Calu3 (cell line): ENCODE measurements at regions of chrX and their contacts with region 1.

Region 1: GRCh38 chrX:74550295-74550802 is 64.1 kb downstream of the RLIM start:
- DNase-seq: peak; percentile 85
- H3K4me3 Mint-ChIP-seq: no peak overlapping the region
- H3K27ac Mint-ChIP-seq: no peak overlapping the region
- H3K4me1 Mint-ChIP-seq: no peaks in the 10 kb centered on the region
- H3K27me3 Mint-ChIP-seq: peaks cover 5% of the 10 kb centered on the region
- CTCF ChIP-seq: peak; percentile 99

Region 2: GRCh38 chrX:73987166-73987565 is 563.2 kb before region 1 on chrX:
- CTCF ChIA-PET with region 1: no interaction called
- intact Hi-C with region 1: no loop called
- DNase-seq: no peak
- H3K4me3 Mint-ChIP-seq: no peak overlapping the region
- H3K27ac Mint-ChIP-seq: no peak overlapping the region
- H3K4me1 Mint-ChIP-seq: no peaks in the 10 kb centered on the region
- H3K27me3 Mint-ChIP-seq: no peaks in the 10 kb centered on the region
- CTCF ChIP-seq: no peak

Region 3: DNA sequence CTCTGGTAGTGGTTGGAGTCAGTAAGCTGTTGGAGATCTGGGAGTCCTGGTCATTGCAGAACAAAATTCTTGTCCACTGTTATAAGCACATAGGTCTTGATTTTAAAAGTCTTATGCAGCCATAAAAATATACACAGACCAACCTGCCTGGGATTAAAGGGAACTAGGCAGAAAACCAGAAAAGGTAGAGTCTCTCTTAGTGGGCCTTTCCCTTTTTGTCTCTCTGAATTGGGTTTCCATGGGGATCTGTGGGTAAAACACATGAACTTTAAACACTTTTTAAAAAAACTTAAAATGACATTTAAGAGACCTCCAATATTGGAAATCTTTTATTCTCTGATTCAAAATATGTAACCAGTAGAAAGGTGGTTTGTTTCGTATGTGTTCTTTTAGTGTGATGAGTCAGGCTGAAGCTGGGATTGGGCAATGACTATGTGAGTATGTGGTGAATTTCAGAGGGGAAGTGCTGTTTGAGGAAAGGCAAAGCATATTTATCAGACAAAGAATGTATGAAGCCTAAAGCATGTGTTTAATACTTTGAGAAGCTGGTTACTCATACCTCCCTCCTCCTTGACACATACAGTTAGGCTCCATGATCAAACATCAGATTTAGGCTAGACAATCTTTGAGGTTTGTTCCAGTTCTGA is 99.4 kb before region 1 on chrX:
- CTCF ChIA-PET with region 1: no interaction called
- intact Hi-C with region 1: loop called (anchors 10 kb)
- DNase-seq: no peak
- H3K4me3 Mint-ChIP-seq: no peak overlapping the region
- H3K27ac Mint-ChIP-seq: no peak overlapping the region
- H3K4me1 Mint-ChIP-seq: no peaks in the 10 kb centered on the region
- H3K27me3 Mint-ChIP-seq: peaks cover 3% of the 10 kb centered on the region
- CTCF ChIP-seq: no peak